WTC11 (cell line): ENCODE measurements at regions of chr10 and their contacts with region 1.

Region 1: DNA sequence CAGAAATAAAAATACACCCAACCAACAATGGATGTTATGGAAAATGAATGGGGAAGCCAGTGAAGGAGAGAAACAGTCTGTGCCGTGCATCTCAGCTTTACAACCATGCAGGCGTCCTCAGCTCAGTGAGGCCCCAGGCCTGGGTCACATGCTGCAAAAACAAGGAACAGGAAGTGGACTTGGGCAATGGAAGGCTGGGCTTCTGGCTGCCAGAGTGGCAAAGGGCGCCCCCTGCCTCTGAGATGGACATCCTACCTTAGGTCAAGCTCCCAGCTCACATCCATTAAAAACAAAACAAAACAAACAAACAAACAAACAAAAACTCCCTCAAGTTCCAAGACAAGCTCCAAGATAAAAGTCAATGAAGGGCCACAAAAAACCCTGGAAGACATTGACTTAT is 54.7 kb upstream of the AFAP1L2 start:
- DNase-seq: peak; percentile 78
- ATAC-seq: peak; percentile 99
- H3K4me3 Mint-ChIP-seq: no peak overlapping the region
- H3K27ac Mint-ChIP-seq: no peak overlapping the region
- H3K4me1 Mint-ChIP-seq: no peaks in the 10 kb centered on the region
- H3K27me3 Mint-ChIP-seq: no peaks in the 10 kb centered on the region
- CTCF ChIP-seq: peak; percentile 71

Region 2: GRCh38 chr10:114427124-114427852 is 31.7 kb before region 1 on chr10:
- CTCF ChIA-PET with region 1: interaction called, 10 read pairs
- POLR2A ChIA-PET with region 1: no interaction called
- DNase-seq: no peak
- ATAC-seq: peak; percentile 60
- H3K4me3 Mint-ChIP-seq: no peak overlapping the region
- H3K27ac Mint-ChIP-seq: no peak overlapping the region
- H3K4me1 Mint-ChIP-seq: peaks cover 14% of the 10 kb centered on the region
- H3K27me3 Mint-ChIP-seq: no peaks in the 10 kb centered on the region
- CTCF ChIP-seq: no peak